Activated CD4-positive, alpha-beta memory T cell treated with anti-CD3 and anti-CD28 coated beads for 36 hours (primary cell): ENCODE measurements at regions of chr15 and their contacts with region 1.

Region 1: GRCh38 chr15:90560229-90560776 is 30.6 kb downstream of the CRTC3 start:
- DNase-seq: no peak
- H3K4me3 Mint-ChIP-seq: no peak overlapping the region
- H3K27ac Mint-ChIP-seq: no peak overlapping the region
- H3K4me1 Mint-ChIP-seq: peaks cover 79% of the 10 kb centered on the region
- H3K27me3 Mint-ChIP-seq: no peaks in the 10 kb centered on the region

Region 2: GRCh38 chr15:90547540-90547939 is 12.8 kb before region 1 on chr15:
- CTCF ChIA-PET with region 1: no interaction called
- POLR2A ChIA-PET with region 1: no interaction called
- intact Hi-C with region 1: loop called (anchors 2 kb)
- DNase-seq: no peak
- H3K4me3 Mint-ChIP-seq: no peak overlapping the region
- H3K27ac Mint-ChIP-seq: no peak overlapping the region
- H3K4me1 Mint-ChIP-seq: peaks cover 51% of the 10 kb centered on the region
- H3K27me3 Mint-ChIP-seq: no peaks in the 10 kb centered on the region

Region 3: DNA sequence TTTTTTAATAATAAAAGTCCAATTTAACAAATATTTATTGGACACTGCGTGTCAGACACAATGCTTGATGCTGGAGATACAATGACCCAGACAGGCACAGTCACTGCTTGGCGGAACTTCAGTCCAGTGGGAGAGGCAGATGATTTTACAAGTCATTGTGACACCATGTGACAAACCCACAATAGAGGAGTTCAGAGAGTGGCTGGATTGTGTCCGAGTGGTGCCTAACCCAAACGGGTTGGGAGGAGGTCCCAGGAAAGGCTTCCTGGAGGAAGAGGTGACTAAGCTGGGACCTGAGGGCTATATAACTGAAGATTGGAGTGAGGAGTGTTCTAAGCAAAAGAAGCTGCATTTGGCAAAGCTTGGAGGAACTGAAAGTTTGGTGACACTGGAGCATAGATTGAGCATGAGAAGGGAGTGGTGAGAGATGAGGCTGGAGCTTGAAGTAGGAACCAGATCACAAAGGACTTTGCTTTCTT is 10.8 kb after region 1 on chr15:
- CTCF ChIA-PET with region 1: interaction called, 4 read pairs
- POLR2A ChIA-PET with region 1: interaction called, 4 read pairs
- intact Hi-C with region 1: loop called (anchors 1 kb)
- DNase-seq: no peak
- H3K4me3 Mint-ChIP-seq: no peak overlapping the region
- H3K27ac Mint-ChIP-seq: no peak overlapping the region
- H3K4me1 Mint-ChIP-seq: peaks cover 66% of the 10 kb centered on the region
- H3K27me3 Mint-ChIP-seq: no peaks in the 10 kb centered on the region